ENCODE measurements at regions of chr17 and their contacts with region 1.

Region 1: GRCh38 chr17:45277216-45277849 is 15.4 kb upstream of the SPATA32 start:
- DNase-seq: peak; percentile 90
- ATAC-seq: peak; percentile 87
- H3K4me3 ChIP-seq: no peak overlapping the region
- H3K27ac ChIP-seq: peak overlapping the region; percentile 36
- H3K4me1 ChIP-seq: peaks cover 17 to 38% of the 10 kb centered on the region in 2 experiments
- H3K27me3 ChIP-seq: no peaks in the 10 kb centered on the region
- CTCF ChIP-seq: peak; percentile 74 to 90 (median 89)
- POLR2A ChIP-seq: no peak
- RAD21 ChIP-seq: peak; percentile 91

Region 2: GRCh38 chr17:44581868-44582267 is 695.5 kb before region 1 on chr17:
- CTCF ChIA-PET with region 1: no interaction called
- POLR2A ChIA-PET with region 1: no interaction called
- RAD21 ChIA-PET with region 1: no interaction called
- intact Hi-C with region 1: no loop called
- DNase-seq: peak; percentile 19
- ATAC-seq: peak; percentile 95
- H3K4me3 ChIP-seq: no peak overlapping the region
- H3K27ac ChIP-seq: no peak overlapping the region
- H3K4me1 ChIP-seq: peaks cover 0 to 2% of the 10 kb centered on the region in 2 experiments; a peak in 2 of 4 replicates
- H3K27me3 ChIP-seq: peaks cover 21% of the 10 kb centered on the region; the same call in 1 of the 2 replicates
- CTCF ChIP-seq: peak; percentile 48 to 58 (median 51); a peak in 5 of 6 replicates
- POLR2A ChIP-seq: no peak
- RAD21 ChIP-seq: peak; percentile 56

Region 3: DNA sequence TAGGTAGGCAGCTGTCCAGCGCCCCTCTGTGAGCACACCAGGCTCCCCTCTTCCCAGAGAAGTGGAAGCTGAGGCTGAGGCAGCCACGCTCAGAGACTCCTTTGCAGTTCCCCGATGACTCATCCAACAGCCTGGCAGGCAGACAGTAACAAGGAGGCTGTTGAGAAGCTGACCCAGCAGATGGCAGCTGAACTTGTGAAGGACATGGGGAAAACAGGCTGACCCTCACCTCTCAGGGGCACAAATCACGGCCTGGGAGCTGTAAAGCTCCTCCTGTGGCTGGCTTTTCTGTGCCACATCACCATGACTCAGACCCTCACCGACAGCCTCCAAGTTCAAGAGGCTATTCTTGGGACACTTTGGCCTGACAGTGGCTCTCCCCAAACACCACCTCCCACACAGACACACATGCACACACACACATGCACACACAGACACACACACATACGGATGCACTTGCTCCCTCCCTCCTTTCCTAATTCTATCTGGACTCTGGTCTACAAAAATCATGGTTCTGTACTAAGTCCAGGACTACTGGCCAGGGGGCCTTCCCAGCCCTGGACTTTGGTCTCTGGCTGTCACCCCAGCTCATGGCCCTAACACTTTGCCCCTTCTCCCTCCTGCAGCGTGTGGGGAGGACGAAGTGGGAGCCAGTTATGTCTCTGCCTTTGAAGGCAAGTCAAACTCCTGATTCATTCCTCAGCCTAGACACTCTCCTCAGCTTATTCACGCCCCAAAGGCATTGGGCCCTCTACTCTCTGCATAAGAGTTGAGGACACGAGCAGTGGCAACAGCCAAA is 16.3 kb after region 1 on chr17:
- CTCF ChIA-PET with region 1: interaction called, 10 read pairs
- POLR2A ChIA-PET with region 1: no interaction called
- RAD21 ChIA-PET with region 1: no interaction called
- intact Hi-C with region 1: no loop called
- DNase-seq: peak; percentile 65
- ATAC-seq: peak; percentile 85
- H3K4me3 ChIP-seq: peak overlapping the region in 1 of 2 experiments; percentile 9; a peak in 1 of 4 replicates
- H3K27ac ChIP-seq: peak overlapping the region; percentile 36
- H3K4me1 ChIP-seq: peaks cover 37 to 62% of the 10 kb centered on the region in 2 experiments
- H3K27me3 ChIP-seq: no peaks in the 10 kb centered on the region
- CTCF ChIP-seq: 0 out of 6 replicates have a peak, but pooled peaks of 1 of the 3 experiments have one; percentile 4
- POLR2A ChIP-seq: no peak
- RAD21 ChIP-seq: peak; percentile 40; the same call in 1 of the 2 replicates

Region 4: DNA sequence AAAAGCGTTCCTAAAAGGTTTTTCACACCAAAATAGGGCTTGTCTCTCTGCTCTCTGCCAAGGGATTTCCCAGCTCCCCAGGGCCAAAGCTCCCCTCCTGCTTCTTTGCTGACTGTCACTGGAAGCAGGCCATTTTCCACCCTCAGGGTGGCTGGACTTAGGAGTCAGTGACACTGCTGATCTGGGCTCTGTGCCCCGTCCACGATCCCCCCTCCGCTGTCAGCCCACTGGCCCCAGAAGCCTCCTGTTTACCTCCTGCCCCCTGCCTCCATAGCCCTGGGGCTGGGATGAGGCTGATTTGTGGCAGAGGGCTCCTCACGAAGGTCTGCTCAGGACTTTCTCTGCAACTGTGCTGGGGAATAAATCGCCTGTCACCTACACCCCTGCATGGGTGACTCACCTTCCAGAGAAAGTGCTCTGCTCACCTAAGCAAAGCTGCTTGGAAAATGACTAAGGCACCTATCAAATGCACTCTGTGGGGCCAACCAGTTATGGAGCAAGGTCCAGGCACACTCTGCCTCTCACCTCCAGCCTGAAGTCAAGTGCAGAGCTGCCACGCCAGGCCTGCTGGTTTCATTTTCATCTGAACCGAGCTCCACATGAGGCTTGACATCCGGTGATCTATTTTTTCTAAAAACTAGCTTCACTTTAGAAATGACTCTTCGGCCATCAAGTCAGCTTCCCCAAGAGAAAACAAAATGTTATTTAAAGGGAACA is 34.6 kb after region 1 on chr17:
- CTCF ChIA-PET with region 1: interaction called, 17 read pairs
- POLR2A ChIA-PET with region 1: no interaction called
- RAD21 ChIA-PET with region 1: interaction called in 1 of 2 experiments, 3 read pairs
- intact Hi-C with region 1: loop called (anchors 2 kb)
- DNase-seq: peak; percentile 82
- ATAC-seq: peak; percentile 70
- H3K4me3 ChIP-seq: peak overlapping the region in 1 of 2 experiments; percentile 39; a peak in 3 of 4 replicates
- H3K27ac ChIP-seq: peak overlapping the region; percentile 82
- H3K4me1 ChIP-seq: peaks cover 71 to 87% of the 10 kb centered on the region in 2 experiments
- H3K27me3 ChIP-seq: no peaks in the 10 kb centered on the region
- CTCF ChIP-seq: no peak
- POLR2A ChIP-seq: no peak
- RAD21 ChIP-seq: peak; percentile 12; the same call in 1 of the 2 replicates

Region 5: DNA sequence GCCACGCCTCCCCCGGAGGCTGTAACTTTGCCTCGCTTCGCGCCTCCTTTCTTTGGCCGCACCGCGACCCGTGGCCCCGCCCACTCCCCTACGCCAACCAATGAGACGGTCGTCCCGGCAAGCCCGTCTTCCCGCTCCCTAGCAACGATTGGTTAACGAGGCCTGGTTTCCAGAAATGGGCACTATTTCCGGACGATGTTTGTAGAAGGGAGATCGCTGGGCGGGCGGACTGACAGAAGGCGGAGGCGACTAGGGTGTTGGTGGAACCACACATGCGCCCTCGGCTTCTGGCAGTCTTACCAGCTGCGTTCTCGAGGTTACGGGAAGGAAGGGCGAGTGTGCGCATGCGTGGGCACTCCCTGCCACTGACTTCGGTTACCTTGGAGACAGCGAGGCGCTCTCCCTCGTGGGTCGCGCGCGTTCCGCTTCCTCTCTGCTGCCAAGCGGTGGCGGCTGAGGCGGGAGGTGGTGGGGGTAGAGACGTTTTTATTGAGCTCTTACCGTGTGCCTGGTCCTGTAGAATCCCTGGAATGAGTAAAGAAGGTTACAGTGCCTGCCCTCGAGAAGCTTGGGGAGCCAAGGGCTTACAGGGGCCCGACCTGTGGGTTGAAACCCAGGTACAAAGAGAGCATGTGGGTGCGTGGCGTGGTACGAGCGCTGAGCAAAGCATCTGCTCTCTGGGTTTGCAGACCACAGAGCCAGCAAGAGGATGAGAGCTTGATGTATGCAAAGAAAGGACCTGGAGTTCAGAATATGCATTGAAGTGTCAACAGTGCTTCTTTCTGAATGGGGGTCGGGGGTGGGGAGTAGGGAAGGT is 40.0 kb after region 1 on chr17:
- CTCF ChIA-PET with region 1: interaction called, 17 read pairs
- POLR2A ChIA-PET with region 1: no interaction called
- RAD21 ChIA-PET with region 1: interaction called in 1 of 2 experiments, 3 read pairs
- intact Hi-C with region 1: loop called (anchors 2 kb)
- DNase-seq: peak; percentile 100
- ATAC-seq: peak; percentile 78
- H3K4me3 ChIP-seq: peak overlapping the region; percentile 55 to 96
- H3K27ac ChIP-seq: peak overlapping the region; percentile 88
- H3K4me1 ChIP-seq: peaks cover 81 to 89% of the 10 kb centered on the region in 2 experiments
- H3K27me3 ChIP-seq: no peaks in the 10 kb centered on the region
- CTCF ChIP-seq: no peak
- POLR2A ChIP-seq: peak; percentile 25
- RAD21 ChIP-seq: no peak